Gastrocnemius medialis (tissue), 4 donors: ENCODE measurements at regions of chr1 and their contacts with region 1.

Region 1: GRCh38 chr1:18681423-18681835 is 50.8 kb downstream of the PAX7 start:
- DNase-seq: no peak
- ATAC-seq: peak; percentile 64 to 72
- H3K4me3 ChIP-seq: no peak overlapping the region
- H3K27ac ChIP-seq: no peak overlapping the region
- H3K4me1 ChIP-seq: no peaks in the 10 kb centered on the region
- H3K27me3 ChIP-seq: peaks cover 0 to 6% (median 0%) of the 10 kb centered on the region in 3 donors
- CTCF ChIP-seq: peak in 3 of 5 experiments; percentile 22 to 54 (median 50)
- POLR2A ChIP-seq: no peak

Region 2: GRCh38 chr1:18761948-18762850 is 80.8 kb after region 1 on chr1:
- in situ Hi-C with region 1: no loop called
- intact Hi-C with region 1: loop called (anchors 10 kb)
- DNase-seq: no peak
- ATAC-seq: no peak
- H3K4me3 ChIP-seq: no peak overlapping the region
- H3K27ac ChIP-seq: no peak overlapping the region
- H3K4me1 ChIP-seq: no peaks in the 10 kb centered on the region
- H3K27me3 ChIP-seq: peaks cover 0 to 29% (median 0%) of the 10 kb centered on the region in 3 donors
- CTCF ChIP-seq: no peak
- POLR2A ChIP-seq: no peak